Tibial artery (tissue), 4 donors: ENCODE measurements at regions of chr7 and their contacts with region 1.

Region 1: DNA sequence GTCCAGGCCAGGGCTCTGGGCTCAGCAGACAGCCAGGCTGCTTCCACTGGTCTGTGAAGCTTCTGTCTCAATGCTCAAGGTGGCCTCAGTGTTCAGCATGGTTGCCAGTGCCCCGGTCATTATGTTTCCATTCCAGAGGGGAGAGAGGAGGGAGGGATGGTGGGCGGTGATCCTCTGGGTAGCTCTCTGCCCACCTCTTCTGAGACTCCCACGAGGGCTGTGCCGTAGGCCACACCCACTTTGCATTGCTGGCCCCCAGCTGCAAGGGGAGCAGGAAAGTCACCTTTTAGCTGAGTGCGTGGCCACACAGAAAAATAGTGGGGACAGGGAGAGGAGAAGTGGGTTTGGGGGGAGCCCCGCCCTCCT is 42.5 kb downstream of the FOXK1 start:
- DNase-seq: no peak
- H3K4me3 ChIP-seq: peak overlapping the region; percentile 55 to 59
- H3K27ac ChIP-seq: peak overlapping the region; percentile 91
- H3K4me1 ChIP-seq: peaks cover 4 to 91% (median 51%) of the 10 kb centered on the region in 4 donors
- H3K27me3 ChIP-seq: no peaks in the 10 kb centered on the region
- CTCF ChIP-seq: no peak

Region 2: GRCh38 chr7:4689668-4690067 is 35.0 kb before region 1 on chr7:
- intact Hi-C with region 1: loop called (anchors 5 kb)
- DNase-seq: no peak
- H3K4me3 ChIP-seq: peak overlapping the region; percentile 37 to 40
- H3K27ac ChIP-seq: peak overlapping the region; percentile 39 to 62
- H3K4me1 ChIP-seq: peaks cover 0 to 97% (median 69%) of the 10 kb centered on the region in 4 donors
- H3K27me3 ChIP-seq: no peaks in the 10 kb centered on the region
- CTCF ChIP-seq: no peak

Region 3: GRCh38 chr7:4744391-4745264 is 20.0 kb after region 1 on chr7:
- intact Hi-C with region 1: loop called (anchors 2 kb)
- DNase-seq: peak; percentile 99 to 100
- H3K4me3 ChIP-seq: peak overlapping the region; percentile 37 to 43
- H3K27ac ChIP-seq: peak overlapping the region; percentile 80 to 91
- H3K4me1 ChIP-seq: peaks cover 0 to 70% (median 57%) of the 10 kb centered on the region in 4 donors
- H3K27me3 ChIP-seq: no peaks in the 10 kb centered on the region
- CTCF ChIP-seq: no peak